MCF 10A (cell line): ENCODE measurements at regions of chr1 and their contacts with region 1.

Region 1: DNA sequence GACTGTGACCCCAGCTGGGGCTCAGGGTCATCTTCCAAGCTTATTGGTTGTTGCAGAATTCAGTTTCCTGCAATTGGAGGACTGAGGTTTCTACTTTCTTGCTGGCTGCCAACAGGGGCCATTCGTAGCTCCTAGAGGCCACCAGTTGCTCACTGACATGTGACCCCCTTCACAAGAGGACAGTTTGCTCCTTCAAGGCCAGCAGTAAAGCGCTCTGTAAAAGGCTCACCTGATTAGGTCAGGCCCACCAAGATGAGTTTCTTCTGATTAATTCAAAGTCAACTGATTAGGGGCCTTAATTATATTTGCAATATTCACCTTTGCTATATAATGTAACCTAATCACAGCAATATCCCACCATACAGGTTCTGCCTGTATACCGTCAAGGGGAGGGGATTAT is 68.9 kb downstream of the SLC9A1 start:
- DNase-seq: no peak
- H3K4me3 Mint-ChIP-seq: no peak overlapping the region
- H3K27ac Mint-ChIP-seq: no peak overlapping the region
- H3K4me1 Mint-ChIP-seq: no peaks in the 10 kb centered on the region
- H3K27me3 Mint-ChIP-seq: peaks cover 16% of the 10 kb centered on the region
- CTCF ChIP-seq: no peak

Region 2: DNA sequence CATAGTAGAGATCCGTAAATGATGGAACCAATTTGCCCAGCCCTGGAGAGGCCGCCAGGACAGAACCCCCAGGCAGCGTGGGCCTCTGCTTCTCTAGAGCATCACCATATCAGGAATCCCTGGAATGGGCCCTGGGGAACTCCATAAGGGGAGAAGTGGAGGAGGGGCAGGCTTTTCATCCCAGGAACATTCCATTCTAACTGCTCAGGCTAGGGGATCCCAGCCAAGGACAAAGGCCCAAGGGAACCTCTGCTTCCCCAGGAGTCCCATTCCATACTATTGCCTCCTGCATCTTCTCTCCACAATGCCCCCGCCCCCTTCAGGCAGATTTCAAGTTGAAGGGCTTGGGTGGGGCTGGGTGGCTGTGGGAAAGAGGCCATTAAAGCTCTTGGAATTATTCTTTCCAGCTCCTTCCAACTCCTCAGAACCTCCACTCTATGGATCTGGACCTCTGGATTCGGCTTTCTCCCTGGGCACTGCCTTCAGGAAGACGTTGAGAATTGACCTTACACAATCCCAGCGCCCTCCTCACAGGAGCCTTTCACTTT is 86.5 kb before region 1 on chr1:
- CTCF ChIA-PET with region 1: interaction called, 20 read pairs
- POLR2A ChIA-PET with region 1: no interaction called
- intact Hi-C with region 1: no loop called
- DNase-seq: peak; percentile 99
- H3K4me3 Mint-ChIP-seq: peak overlapping the region; percentile 80
- H3K27ac Mint-ChIP-seq: peak overlapping the region; percentile 92
- H3K4me1 Mint-ChIP-seq: peaks cover 45% of the 10 kb centered on the region
- H3K27me3 Mint-ChIP-seq: no peaks in the 10 kb centered on the region
- CTCF ChIP-seq: no peak